ENCODE measurements at regions of chr3 and their contacts with region 1.

Region 1: GRCh38 chr3:100708967-100709841 is at the start of gene TFG:
- DNase-seq: peak; percentile 96
- H3K4me3 ChIP-seq: peak within 1 kb of the TSS; percentile 78 to 86 (median 81)
- H3K27ac ChIP-seq: peak within 1 kb of the TSS; percentile 95
- H3K4me1 ChIP-seq: peaks cover 0 to 8% (median 2%) of the 10 kb centered on the region in 4 experiments; a peak in 3 of 7 replicates
- H3K27me3 ChIP-seq: peaks cover 1 to 25% (median 11%) of the 10 kb centered on the region in 4 experiments; a peak in 6 of 7 replicates
- CTCF ChIP-seq: no peak
- EP300 ChIP-seq: no peak
- POLR2A ChIP-seq: peak; percentile 79 to 92
- RAD21 ChIP-seq: no peak
- total RNA-seq, gene TFG: 81.9 and 84.2 TPM in 2 replicates

Region 2: GRCh38 chr3:100437721-100438622 is 271.2 kb before region 1 on chr3:
- CTCF ChIA-PET with region 1: no interaction called
- POLR2A ChIA-PET with region 1: no interaction called
- DNase-seq: no peak
- H3K4me3 ChIP-seq: no peak overlapping the region
- H3K27ac ChIP-seq: no peak overlapping the region
- H3K4me1 ChIP-seq: no peaks in the 10 kb centered on the region
- H3K27me3 ChIP-seq: no peaks in the 10 kb centered on the region
- CTCF ChIP-seq: no peak
- EP300 ChIP-seq: no peak
- POLR2A ChIP-seq: no peak
- RAD21 ChIP-seq: no peak

Region 3: GRCh38 chr3:100725935-100726513 is 16.8 kb after region 1 on chr3:
- CTCF ChIA-PET with region 1: interaction called, 5 read pairs
- POLR2A ChIA-PET with region 1: interaction called, 14 read pairs
- DNase-seq: no peak
- H3K4me3 ChIP-seq: no peak overlapping the region
- H3K27ac ChIP-seq: no peak overlapping the region
- H3K4me1 ChIP-seq: peaks cover 0 to 4% (median 1%) of the 10 kb centered on the region in 4 experiments; a peak in 2 of 7 replicates
- H3K27me3 ChIP-seq: no peaks in the 10 kb centered on the region
- CTCF ChIP-seq: no peak
- EP300 ChIP-seq: no peak
- POLR2A ChIP-seq: no peak
- RAD21 ChIP-seq: no peak

Region 4: DNA sequence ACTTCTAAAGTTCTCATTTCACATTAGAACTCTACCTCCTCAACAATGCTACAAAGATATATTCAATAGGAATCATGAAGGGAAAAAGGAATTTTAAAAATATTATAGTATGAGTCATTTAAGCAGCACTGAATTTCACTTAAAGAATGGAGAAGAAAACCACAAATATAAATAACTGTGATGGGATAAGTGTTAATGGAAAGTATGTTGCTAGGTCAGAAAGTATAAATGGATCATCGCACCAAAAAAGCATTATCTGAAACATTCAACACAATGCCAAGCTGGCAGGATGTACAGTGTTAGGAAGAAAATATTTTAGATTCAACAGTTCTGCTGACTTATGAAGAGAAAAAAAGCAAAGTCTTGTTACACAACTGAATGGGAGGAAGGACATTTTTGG is 101.5 kb after region 1 on chr3:
- CTCF ChIA-PET with region 1: no interaction called
- POLR2A ChIA-PET with region 1: no interaction called
- DNase-seq: no peak
- H3K4me3 ChIP-seq: no peak overlapping the region
- H3K27ac ChIP-seq: no peak overlapping the region
- H3K4me1 ChIP-seq: no peaks in the 10 kb centered on the region
- H3K27me3 ChIP-seq: no peaks in the 10 kb centered on the region
- CTCF ChIP-seq: no peak
- EP300 ChIP-seq: no peak
- POLR2A ChIP-seq: no peak
- RAD21 ChIP-seq: no peak

Region 5: GRCh38 chr3:100825574-100825973 is 116.4 kb after region 1 on chr3:
- CTCF ChIA-PET with region 1: no interaction called
- POLR2A ChIA-PET with region 1: no interaction called
- DNase-seq: no peak
- H3K4me3 ChIP-seq: no peak overlapping the region
- H3K27ac ChIP-seq: no peak overlapping the region
- H3K4me1 ChIP-seq: no peaks in the 10 kb centered on the region
- H3K27me3 ChIP-seq: no peaks in the 10 kb centered on the region
- CTCF ChIP-seq: no peak
- EP300 ChIP-seq: no peak
- POLR2A ChIP-seq: no peak
- RAD21 ChIP-seq: no peak

Measured in H1 (cell line).